CD8-positive, alpha-beta memory T cell (primary cell): ENCODE measurements at regions of chr9 and their contacts with region 1.

Region 1: GRCh38 chr9:4666042-4666699 is at the start of gene SPATA6L:
- DNase-seq: peak; percentile 20 to 67 (median 33)
- H3K4me3 ChIP-seq: peak within 1 kb of the TSS; percentile 58
- H3K4me3 Mint-ChIP-seq: peak within 1 kb of the TSS; percentile 81 to 91 (median 88)
- H3K27ac ChIP-seq: no peak within 1 kb of the TSS
- H3K27ac Mint-ChIP-seq: peak within 1 kb of the TSS; percentile 60 to 93 (median 80)
- H3K4me1 ChIP-seq: peaks cover 57% of the 10 kb centered on the region
- H3K4me1 Mint-ChIP-seq: peaks cover 58 to 72% (median 70%) of the 10 kb centered on the region in 3 donors
- H3K27me3 ChIP-seq: no peaks in the 10 kb centered on the region
- H3K27me3 Mint-ChIP-seq: peaks cover 0 to 9% of the 10 kb centered on the region in 2 donors
- total RNA-seq, gene SPATA6L: 0.51 to 0.96 TPM

Region 2: DNA sequence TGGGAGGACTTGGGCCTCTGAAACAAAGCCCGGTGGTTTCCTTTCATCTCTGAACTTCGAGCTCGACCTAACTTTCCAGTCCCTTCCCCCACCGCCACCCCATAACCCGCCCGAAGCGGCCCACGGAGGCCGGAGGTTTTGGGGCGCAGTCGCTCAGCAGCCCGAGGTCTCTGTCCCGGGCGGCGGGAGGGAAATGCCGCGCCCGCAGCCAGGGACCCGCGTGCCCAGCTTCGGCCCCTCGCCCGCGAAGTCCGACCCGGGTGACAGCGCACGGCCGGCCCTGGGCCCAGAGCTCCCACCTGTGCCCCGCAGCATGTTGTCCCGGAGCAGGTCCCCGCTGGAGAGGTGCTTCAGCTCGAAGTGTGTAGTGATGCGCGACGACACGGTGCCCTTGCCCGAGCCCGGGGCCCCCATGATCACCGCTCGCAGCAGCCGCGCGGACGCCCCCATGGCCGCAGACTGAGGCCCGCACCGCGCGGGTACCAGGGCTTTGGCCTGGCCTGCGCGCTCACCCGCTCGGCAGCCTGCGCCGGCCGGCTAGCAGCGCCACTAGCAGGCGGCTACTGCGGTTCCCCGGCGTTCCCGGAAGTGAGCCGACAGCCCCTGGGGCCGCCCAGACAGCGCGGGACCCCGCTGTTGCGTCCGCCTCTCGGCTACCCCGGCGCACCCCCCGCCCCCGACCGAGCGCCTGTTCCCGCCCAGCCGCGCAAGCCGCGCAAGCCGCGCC is 74.6 kb after region 1 on chr9 and contains the start of gene AK3:
- CTCF ChIA-PET with region 1: interaction called, 5 read pairs
- POLR2A ChIA-PET with region 1: interaction called, 14 read pairs
- DNase-seq: peak; percentile 85 to 92 (median 87)
- H3K4me3 ChIP-seq: peak within 1 kb of the TSS; percentile 86
- H3K4me3 Mint-ChIP-seq: peak within 1 kb of the TSS; percentile 85 to 100 (median 94)
- H3K27ac ChIP-seq: peak within 1 kb of the TSS; percentile 79
- H3K27ac Mint-ChIP-seq: peak within 1 kb of the TSS; percentile 86 to 99 (median 92)
- H3K4me1 ChIP-seq: peaks cover 25% of the 10 kb centered on the region
- H3K4me1 Mint-ChIP-seq: peaks cover 30 to 50% (median 43%) of the 10 kb centered on the region in 3 donors
- H3K27me3 ChIP-seq: no peaks in the 10 kb centered on the region
- H3K27me3 Mint-ChIP-seq: no peaks in the 10 kb centered on the region
- total RNA-seq, gene AK3: 25.3 to 29.8 TPM